IMR-90 (cell line): ENCODE measurements at regions of chr1 and their contacts with region 1.

Region 1: GRCh38 chr1:227946624-227947385 is 927 bp downstream of the WNT9A start:
- DNase-seq: peak; percentile 46
- ATAC-seq: peak; percentile 52
- H3K4me3 ChIP-seq: peak overlapping the region; percentile 66
- H3K27ac ChIP-seq: no peak overlapping the region
- H3K4me1 ChIP-seq: peaks cover 6% of the 10 kb centered on the region; the same call in 1 of the 2 replicates
- H3K27me3 ChIP-seq: no peaks in the 10 kb centered on the region; the same call in 1 of the 2 replicates
- CTCF ChIP-seq: peak; percentile 80
- POLR2A ChIP-seq: no peak
- RAD21 ChIP-seq: peak; percentile 82

Region 2: DNA sequence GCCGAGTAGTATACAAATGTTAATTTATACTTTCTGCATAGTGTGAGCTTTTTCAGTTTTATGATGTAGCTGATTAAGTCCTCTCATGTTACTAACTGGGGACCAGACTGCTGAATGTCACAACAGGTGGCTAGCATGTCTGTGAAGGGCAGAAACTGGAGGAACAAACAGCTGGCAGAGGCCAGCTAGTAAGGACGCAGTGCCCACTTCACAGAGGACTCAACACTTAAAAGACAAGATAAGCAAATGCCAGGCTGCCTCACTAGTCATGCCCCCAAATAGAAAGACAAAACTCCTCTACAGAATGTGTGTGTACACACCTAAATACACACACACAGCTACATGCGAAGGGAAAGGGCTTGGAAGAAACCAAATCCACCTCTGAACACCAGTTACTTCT is 457.2 kb before region 1 on chr1:
- CTCF ChIA-PET with region 1: no interaction called
- POLR2A ChIA-PET with region 1: no interaction called
- dilution Hi-C with region 1: no loop called
- in situ Hi-C with region 1: loop called (anchors 25 kb)
- intact Hi-C with region 1: no loop called
- DNase-seq: no peak
- ATAC-seq: no peak
- H3K4me3 ChIP-seq: no peak overlapping the region
- H3K27ac ChIP-seq: no peak overlapping the region
- H3K4me1 ChIP-seq: no peaks in the 10 kb centered on the region
- H3K27me3 ChIP-seq: peaks cover 2% of the 10 kb centered on the region
- CTCF ChIP-seq: no peak
- POLR2A ChIP-seq: no peak
- RAD21 ChIP-seq: no peak

Region 3: DNA sequence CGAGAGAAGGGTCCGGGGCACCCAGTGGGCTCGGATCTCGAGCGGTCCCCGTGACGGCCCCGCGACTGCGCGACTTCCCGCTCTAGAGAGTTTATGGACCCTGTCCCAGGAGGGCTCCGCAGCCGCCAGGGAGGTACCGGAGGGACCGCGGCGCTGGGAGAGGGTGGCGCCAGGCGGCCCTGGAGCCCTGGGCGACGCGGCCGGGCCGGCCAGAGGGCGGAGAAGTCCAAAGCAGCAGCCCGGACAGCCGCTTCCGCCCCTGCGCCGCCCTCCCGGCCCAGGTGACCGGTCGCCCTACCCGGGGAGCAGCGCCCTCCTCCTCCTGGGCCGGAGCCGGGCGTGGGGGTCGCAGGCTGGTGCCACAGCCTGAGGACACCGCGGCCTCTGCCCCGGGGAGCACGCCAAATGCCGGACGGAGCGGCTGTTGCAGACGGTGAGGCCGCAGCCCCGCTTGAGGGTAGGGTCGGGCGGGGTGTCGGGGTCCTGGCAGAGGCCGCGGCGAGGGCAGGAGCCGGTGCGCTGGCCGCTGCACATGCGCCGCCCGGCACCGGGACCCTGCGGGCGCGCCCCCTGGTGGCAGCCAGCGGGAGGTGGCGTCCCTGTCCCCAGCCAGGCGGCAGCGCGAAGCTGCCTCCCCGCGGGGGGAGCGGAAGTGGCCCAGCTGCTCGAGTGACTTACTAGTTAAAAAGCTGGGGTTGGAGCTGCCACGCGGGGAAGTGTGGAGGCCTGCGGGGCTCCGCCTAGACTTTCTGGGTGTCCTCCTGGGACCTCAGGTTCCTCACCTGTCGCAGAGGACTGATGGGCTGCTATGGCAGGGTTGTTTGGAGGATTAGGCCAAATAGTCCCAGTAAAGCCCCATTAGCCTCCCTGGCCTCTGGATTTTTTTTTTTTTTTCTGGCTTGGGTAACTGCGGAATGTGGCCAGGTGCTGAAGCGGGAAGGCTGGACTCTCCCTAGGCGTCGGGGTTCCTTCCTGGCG is 404.4 kb before region 1 on chr1:
- CTCF ChIA-PET with region 1: no interaction called
- POLR2A ChIA-PET with region 1: no interaction called
- dilution Hi-C with region 1: no loop called
- in situ Hi-C with region 1: no loop called
- intact Hi-C with region 1: loop called (anchors 10 kb)
- DNase-seq: peak; percentile 80
- ATAC-seq: peak; percentile 97
- H3K4me3 ChIP-seq: peak overlapping the region; percentile 60
- H3K27ac ChIP-seq: peak overlapping the region; percentile 67
- H3K4me1 ChIP-seq: peaks cover 2% of the 10 kb centered on the region; the same call in 1 of the 2 replicates
- H3K27me3 ChIP-seq: no peaks in the 10 kb centered on the region
- CTCF ChIP-seq: peak; percentile 94
- POLR2A ChIP-seq: no peak
- RAD21 ChIP-seq: peak; percentile 45

Region 4: DNA sequence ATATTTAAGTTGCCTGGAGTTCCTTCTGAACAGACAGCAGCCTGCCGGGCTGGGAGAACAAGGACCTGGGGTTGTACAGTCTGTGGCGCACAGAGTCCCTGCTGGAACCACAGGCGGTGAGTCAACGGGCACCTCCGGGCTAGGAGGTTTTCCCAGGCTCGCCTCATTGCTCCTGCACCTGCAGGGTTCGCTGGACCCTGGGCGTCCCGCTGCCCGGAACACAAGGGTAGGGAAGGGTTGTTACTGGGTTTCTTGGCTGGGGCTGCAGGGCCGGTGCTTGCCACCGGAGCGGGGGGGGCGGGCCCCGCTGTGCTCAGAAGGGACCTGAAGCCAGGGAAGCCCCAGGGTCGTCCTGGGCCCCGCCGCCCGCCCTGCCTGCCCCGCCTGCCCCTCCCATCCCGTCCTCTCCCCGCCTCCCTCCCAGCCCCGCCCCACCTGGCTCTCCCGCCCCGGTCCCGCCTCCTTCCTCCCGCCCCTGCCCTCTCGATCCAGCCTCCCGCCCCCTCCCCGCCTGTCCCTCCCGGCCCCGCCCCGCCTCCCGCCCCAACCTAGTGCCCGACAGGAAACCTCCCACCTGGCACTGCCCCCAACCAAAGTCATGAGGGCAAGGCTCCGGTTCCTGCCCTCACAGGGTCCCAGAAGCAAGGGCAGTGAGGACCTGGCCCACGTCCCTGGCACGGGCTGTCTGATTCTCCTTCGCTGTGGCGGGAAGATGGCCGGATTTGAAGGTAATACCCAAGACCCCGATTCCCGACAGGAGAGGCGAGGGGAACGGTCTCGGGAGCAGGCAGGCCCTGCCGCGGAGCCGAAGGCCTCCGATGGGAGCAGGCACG is 218.5 kb before region 1 on chr1:
- CTCF ChIA-PET with region 1: no interaction called
- POLR2A ChIA-PET with region 1: no interaction called
- dilution Hi-C with region 1: no loop called
- in situ Hi-C with region 1: no loop called
- intact Hi-C with region 1: loop called (anchors 1 kb)
- DNase-seq: peak; percentile 43
- ATAC-seq: peak; percentile 51
- H3K4me3 ChIP-seq: peak overlapping the region; percentile 60
- H3K27ac ChIP-seq: peak overlapping the region; percentile 16; the same call in 1 of the 2 replicates
- H3K4me1 ChIP-seq: no peaks in the 10 kb centered on the region; the same call in 1 of the 2 replicates
- H3K27me3 ChIP-seq: no peaks in the 10 kb centered on the region
- CTCF ChIP-seq: no peak
- POLR2A ChIP-seq: no peak
- RAD21 ChIP-seq: no peak

Region 5: GRCh38 chr1:227762233-227762911 is 184.4 kb before region 1 on chr1:
- CTCF ChIA-PET with region 1: interaction called, 7 read pairs
- POLR2A ChIA-PET with region 1: no interaction called
- dilution Hi-C with region 1: no loop called
- in situ Hi-C with region 1: loop called (anchors 5 kb)
- intact Hi-C with region 1: loop called (anchors 1 kb)
- DNase-seq: peak; percentile 69
- ATAC-seq: peak; percentile 74
- H3K4me3 ChIP-seq: no peak overlapping the region
- H3K27ac ChIP-seq: peak overlapping the region; percentile 7; the same call in 1 of the 2 replicates
- H3K4me1 ChIP-seq: peaks cover 38% of the 10 kb centered on the region
- H3K27me3 ChIP-seq: no peaks in the 10 kb centered on the region
- CTCF ChIP-seq: peak; percentile 92
- POLR2A ChIP-seq: no peak
- RAD21 ChIP-seq: peak; percentile 93

Region 6: GRCh38 chr1:227787513-227788270 is 159.1 kb before region 1 on chr1:
- CTCF ChIA-PET with region 1: no interaction called
- POLR2A ChIA-PET with region 1: interaction called, 9 read pairs
- dilution Hi-C with region 1: no loop called
- in situ Hi-C with region 1: no loop called
- intact Hi-C with region 1: loop called (anchors 1 kb)
- DNase-seq: peak; percentile 93
- ATAC-seq: peak; percentile 91
- H3K4me3 ChIP-seq: peak overlapping the region; percentile 85
- H3K27ac ChIP-seq: 0 out of 2 replicates have a peak overlapping the region, but pooled peaks have one; percentile 18
- H3K4me1 ChIP-seq: peaks cover 3% of the 10 kb centered on the region; the same call in 1 of the 2 replicates
- H3K27me3 ChIP-seq: no peaks in the 10 kb centered on the region
- CTCF ChIP-seq: no peak
- POLR2A ChIP-seq: no peak
- RAD21 ChIP-seq: no peak

Region 7: DNA sequence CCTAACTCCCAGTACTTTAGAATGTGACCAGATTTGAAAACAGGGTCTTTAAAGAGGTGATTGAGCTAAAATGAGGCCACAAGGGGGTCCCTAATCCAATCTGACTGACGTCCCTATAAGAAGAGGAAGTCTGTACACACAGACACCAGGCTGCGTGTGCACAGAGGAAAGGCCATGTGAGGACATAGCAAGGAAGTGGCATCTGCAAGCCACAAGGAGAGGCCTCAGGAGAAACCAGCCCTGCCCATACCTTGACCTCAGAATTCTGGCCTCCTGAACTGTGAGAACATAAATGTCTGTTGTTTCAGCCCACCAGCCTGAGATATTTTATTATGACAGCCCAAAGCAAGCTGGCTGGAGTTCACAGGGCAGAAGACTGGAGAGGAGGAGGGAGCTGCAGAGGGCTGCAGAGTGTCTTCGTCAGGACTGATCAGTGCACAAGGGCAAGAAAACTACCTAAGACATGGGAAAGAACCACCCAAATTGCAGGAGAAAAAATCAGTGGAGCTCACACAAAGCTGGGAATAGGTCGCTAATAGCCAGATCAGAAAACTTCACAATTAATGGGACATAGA is 14.9 kb after region 1 on chr1:
- CTCF ChIA-PET with region 1: no interaction called
- POLR2A ChIA-PET with region 1: no interaction called
- dilution Hi-C with region 1: no loop called
- in situ Hi-C with region 1: no loop called
- intact Hi-C with region 1: no loop called
- DNase-seq: no peak
- ATAC-seq: no peak
- H3K4me3 ChIP-seq: no peak overlapping the region
- H3K27ac ChIP-seq: no peak overlapping the region
- H3K4me1 ChIP-seq: no peaks in the 10 kb centered on the region
- H3K27me3 ChIP-seq: peaks cover 4% of the 10 kb centered on the region; the same call in 1 of the 2 replicates
- CTCF ChIP-seq: no peak
- POLR2A ChIP-seq: no peak
- RAD21 ChIP-seq: no peak

Region 8: DNA sequence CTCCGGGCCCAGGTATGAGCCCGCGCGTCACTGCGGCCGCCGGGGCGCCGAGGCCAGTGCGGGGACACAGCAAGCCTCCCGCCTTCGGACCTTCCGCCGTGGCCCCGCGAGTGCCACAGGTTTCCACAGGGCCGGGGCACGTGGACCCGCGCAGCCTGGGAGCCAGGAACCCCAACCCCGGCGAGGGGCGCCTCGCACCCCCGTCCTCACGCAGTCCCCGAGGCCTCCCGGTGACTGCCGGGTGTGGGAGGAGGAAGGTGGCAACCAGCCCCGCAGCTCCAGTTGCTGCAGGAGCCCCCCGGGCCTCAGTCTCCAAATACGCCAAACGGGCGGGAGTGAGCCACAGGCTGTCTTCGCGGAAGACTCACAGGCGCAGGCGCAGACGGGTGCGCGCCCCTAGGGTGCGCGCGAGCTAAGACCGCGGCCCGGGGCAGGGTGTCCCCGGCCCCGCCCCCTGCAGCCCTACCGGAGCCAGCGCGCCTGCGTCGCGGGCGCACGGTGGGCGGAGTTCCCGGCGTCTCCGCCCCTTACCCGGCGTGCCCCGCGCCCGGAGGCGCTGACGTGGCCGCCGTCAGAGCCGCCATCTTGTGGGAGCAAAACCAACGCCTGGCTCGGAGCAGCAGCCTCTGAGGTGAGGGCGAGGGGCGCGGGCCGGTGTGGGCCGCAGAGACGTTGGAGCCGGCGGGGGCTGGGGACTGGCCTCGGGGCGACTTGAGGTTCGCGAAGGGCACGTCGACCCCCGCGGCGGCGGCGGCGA is 135.5 kb after region 1 on chr1 and contains the start of gene ARF1:
- CTCF ChIA-PET with region 1: no interaction called
- POLR2A ChIA-PET with region 1: no interaction called
- dilution Hi-C with region 1: no loop called
- in situ Hi-C with region 1: no loop called
- intact Hi-C with region 1: loop called (anchors 5 kb)
- DNase-seq: peak; percentile 92
- ATAC-seq: peak; percentile 89
- H3K4me3 ChIP-seq: peak within 1 kb of the TSS; percentile 100
- H3K27ac ChIP-seq: peak within 1 kb of the TSS; percentile 99
- H3K4me1 ChIP-seq: peaks cover 18% of the 10 kb centered on the region
- H3K27me3 ChIP-seq: no peaks in the 10 kb centered on the region
- CTCF ChIP-seq: no peak
- POLR2A ChIP-seq: peak; percentile 97
- RAD21 ChIP-seq: no peak
- total RNA-seq, gene ARF1: 306 and 330 TPM in 2 replicates